Panc1 (cell line): ENCODE measurements at regions of chr19 and their contacts with region 1.

Region 1: GRCh38 chr19:5170329-5170745 is 170.3 kb downstream of the PTPRS start:
- DNase-seq: no peak
- ATAC-seq: peak; percentile 56; the same call in 1 of the 2 replicates
- H3K4me3 ChIP-seq: no peak overlapping the region
- H3K27ac ChIP-seq: no peak overlapping the region
- H3K4me1 ChIP-seq: no peaks in the 10 kb centered on the region
- H3K27me3 ChIP-seq: no peaks in the 10 kb centered on the region
- CTCF ChIP-seq: no peak; the same call in 1 of the 2 replicates

Region 2: DNA sequence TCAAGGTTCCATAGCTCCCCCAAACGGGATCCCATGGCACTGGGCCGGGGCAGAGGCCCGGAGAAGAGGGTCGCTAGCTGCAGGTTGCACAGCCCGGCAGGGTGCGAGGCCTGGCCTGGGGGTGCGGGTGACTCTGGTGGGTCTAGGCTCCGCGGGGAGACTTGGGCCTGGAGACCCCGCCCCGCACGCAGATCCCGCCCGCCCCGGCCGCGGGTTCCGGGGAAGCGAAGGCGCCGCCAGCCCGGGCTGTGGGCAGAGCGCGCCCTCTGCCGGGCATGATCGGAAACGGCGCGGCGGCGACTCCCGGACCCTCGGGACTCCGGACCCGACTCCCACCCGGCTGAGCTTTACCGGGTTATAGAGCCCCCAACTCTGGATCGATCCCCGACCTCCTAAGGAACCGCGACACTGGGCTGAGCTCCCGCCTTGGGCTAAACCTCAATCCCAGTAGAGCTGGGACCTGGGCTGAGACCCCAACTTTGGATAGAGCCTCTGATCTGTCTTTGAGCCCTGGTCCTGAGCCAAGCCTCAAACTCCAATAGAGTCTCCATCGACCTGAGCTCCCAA is 534.1 kb before region 1 on chr19:
- CTCF ChIA-PET with region 1: no interaction called
- POLR2A ChIA-PET with region 1: no interaction called
- in situ Hi-C with region 1: no loop called
- intact Hi-C with region 1: no loop called
- DNase-seq: no peak
- ATAC-seq: peak; percentile 45
- H3K4me3 ChIP-seq: peak overlapping the region; percentile 38 to 61
- H3K27ac ChIP-seq: 0 out of 2 replicates have a peak overlapping the region, but pooled peaks have one; percentile 63
- H3K4me1 ChIP-seq: peaks cover 3% of the 10 kb centered on the region
- H3K27me3 ChIP-seq: no peaks in the 10 kb centered on the region
- CTCF ChIP-seq: peak; percentile 95

Region 3: GRCh38 chr19:5117421-5117820 is 52.9 kb before region 1 on chr19:
- CTCF ChIA-PET with region 1: no interaction called
- POLR2A ChIA-PET with region 1: interaction called, 13 read pairs
- in situ Hi-C with region 1: no loop called
- intact Hi-C with region 1: no loop called
- DNase-seq: no peak
- ATAC-seq: peak; percentile 46; the same call in 1 of the 2 replicates
- H3K4me3 ChIP-seq: no peak overlapping the region
- H3K27ac ChIP-seq: no peak overlapping the region
- H3K4me1 ChIP-seq: no peaks in the 10 kb centered on the region
- H3K27me3 ChIP-seq: no peaks in the 10 kb centered on the region
- CTCF ChIP-seq: no peak

Region 4: GRCh38 chr19:5186293-5187050 is 16.1 kb after region 1 on chr19:
- CTCF ChIA-PET with region 1: interaction called, 10 read pairs
- POLR2A ChIA-PET with region 1: no interaction called
- in situ Hi-C with region 1: no loop called
- intact Hi-C with region 1: no loop called
- DNase-seq: no peak
- ATAC-seq: no peak
- H3K4me3 ChIP-seq: no peak overlapping the region
- H3K27ac ChIP-seq: no peak overlapping the region
- H3K4me1 ChIP-seq: no peaks in the 10 kb centered on the region
- H3K27me3 ChIP-seq: no peaks in the 10 kb centered on the region
- CTCF ChIP-seq: no peak

Region 5: DNA sequence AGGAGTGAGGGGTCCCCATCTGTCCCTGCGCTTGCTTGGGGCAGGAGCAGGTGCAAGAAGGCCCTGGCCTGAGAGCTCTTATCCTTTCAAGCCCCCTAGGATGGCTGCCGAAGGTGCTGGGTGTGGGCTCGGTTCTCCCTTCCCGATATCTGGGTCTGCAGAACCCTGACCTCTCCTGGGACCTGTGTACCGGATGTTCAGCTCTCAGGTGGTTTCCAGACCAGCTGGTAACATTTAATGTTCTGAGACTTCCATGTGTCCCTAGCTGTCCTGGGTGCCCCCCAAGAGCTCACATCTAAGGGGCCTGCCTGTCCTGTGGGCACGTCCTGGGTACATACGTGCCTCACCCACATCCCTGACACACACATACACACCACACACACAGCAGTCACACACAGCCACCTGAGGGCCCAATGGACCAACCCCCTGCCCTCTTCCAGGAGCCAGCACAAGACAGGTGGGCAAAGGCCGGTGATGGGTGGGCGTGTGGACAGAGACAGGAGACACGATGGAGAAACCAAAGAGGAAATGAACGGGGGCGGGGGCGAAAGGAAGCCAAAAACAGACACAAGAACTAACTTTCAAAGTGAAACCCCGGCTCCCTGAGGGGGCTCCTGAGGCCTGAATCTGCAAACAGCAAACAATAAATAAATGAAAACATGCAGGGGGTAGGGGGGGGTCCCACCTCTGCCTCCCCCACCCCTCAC is 46.0 kb after region 1 on chr19:
- CTCF ChIA-PET with region 1: no interaction called
- POLR2A ChIA-PET with region 1: no interaction called
- in situ Hi-C with region 1: no loop called
- intact Hi-C with region 1: no loop called
- DNase-seq: no peak
- ATAC-seq: no peak
- H3K4me3 ChIP-seq: no peak overlapping the region
- H3K27ac ChIP-seq: no peak overlapping the region
- H3K4me1 ChIP-seq: no peaks in the 10 kb centered on the region
- H3K27me3 ChIP-seq: no peaks in the 10 kb centered on the region
- CTCF ChIP-seq: no peak